Activated B cell treated with CpG ODN at 0.5 μM for 24 hours (primary cell): ENCODE measurements at regions of chr6 and their contacts with region 1.

Region 1: GRCh38 chr6:27672113-27672799 is 199.4 kb upstream of the ZNF184 start:
- DNase-seq: no peak
- ATAC-seq: no peak
- H3K4me3 Mint-ChIP-seq: peak overlapping the region; percentile 2
- H3K27ac Mint-ChIP-seq: peak overlapping the region; percentile 2
- H3K4me1 Mint-ChIP-seq: peaks cover 26% of the 10 kb centered on the region
- H3K27me3 Mint-ChIP-seq: peaks cover 65% of the 10 kb centered on the region
- CTCF ChIP-seq: no peak

Region 2: DNA sequence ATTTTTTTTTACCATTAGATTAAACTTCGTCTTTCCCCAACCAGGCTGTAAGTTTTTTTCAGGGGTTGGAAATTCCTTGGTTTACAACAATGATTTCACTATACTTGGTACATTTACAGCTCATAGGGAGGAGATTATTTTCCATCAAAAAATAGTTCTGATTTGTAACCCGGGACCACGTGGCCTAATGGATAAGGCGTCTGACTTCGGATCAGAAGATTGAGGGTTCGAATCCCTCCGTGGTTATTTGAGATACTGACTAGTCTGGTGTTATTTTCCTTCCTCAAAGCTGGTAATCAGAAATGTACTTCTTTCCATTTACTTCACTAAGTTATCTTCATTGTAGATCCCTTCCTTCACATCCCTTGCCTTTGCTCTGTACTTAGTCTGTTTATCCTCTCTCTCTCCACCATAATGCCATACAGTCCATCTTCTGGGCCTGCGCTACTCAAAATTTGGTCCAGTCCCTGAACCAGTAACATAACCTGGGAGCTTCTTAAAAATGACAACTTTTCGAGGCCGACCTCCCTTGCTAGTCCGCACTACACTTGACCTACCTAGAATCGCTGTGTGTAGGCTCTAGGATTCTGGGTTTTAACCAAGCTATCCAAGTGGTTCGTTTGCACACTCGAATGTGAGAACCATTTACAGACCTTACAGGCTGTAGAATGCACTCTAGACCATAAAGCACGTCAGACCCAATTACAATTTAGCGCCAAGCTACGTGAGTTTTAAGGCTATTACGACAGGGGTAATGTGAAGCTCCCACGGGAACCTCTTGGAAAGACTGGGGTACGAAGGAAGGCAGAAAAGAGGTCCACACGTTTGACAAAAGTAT is 1349.4 kb before region 1 on chr6:
- CTCF ChIA-PET with region 1: no interaction called
- POLR2A ChIA-PET with region 1: no interaction called
- intact Hi-C with region 1: loop called (anchors 5 kb)
- DNase-seq: no peak
- ATAC-seq: peak; percentile 56
- H3K4me3 Mint-ChIP-seq: peak overlapping the region; percentile 89
- H3K27ac Mint-ChIP-seq: peak overlapping the region; percentile 85
- H3K4me1 Mint-ChIP-seq: peaks cover 25% of the 10 kb centered on the region
- H3K27me3 Mint-ChIP-seq: peaks cover 14% of the 10 kb centered on the region
- CTCF ChIP-seq: no peak

Region 3: GRCh38 chr6:27553123-27553904 is 118.9 kb before region 1 on chr6:
- CTCF ChIA-PET with region 1: no interaction called
- POLR2A ChIA-PET with region 1: no interaction called
- intact Hi-C with region 1: loop called (anchors 5 kb)
- DNase-seq: no peak
- ATAC-seq: no peak
- H3K4me3 Mint-ChIP-seq: no peak overlapping the region
- H3K27ac Mint-ChIP-seq: no peak overlapping the region
- H3K4me1 Mint-ChIP-seq: peaks cover 11% of the 10 kb centered on the region
- H3K27me3 Mint-ChIP-seq: peaks cover 63% of the 10 kb centered on the region
- CTCF ChIP-seq: no peak

Region 4: DNA sequence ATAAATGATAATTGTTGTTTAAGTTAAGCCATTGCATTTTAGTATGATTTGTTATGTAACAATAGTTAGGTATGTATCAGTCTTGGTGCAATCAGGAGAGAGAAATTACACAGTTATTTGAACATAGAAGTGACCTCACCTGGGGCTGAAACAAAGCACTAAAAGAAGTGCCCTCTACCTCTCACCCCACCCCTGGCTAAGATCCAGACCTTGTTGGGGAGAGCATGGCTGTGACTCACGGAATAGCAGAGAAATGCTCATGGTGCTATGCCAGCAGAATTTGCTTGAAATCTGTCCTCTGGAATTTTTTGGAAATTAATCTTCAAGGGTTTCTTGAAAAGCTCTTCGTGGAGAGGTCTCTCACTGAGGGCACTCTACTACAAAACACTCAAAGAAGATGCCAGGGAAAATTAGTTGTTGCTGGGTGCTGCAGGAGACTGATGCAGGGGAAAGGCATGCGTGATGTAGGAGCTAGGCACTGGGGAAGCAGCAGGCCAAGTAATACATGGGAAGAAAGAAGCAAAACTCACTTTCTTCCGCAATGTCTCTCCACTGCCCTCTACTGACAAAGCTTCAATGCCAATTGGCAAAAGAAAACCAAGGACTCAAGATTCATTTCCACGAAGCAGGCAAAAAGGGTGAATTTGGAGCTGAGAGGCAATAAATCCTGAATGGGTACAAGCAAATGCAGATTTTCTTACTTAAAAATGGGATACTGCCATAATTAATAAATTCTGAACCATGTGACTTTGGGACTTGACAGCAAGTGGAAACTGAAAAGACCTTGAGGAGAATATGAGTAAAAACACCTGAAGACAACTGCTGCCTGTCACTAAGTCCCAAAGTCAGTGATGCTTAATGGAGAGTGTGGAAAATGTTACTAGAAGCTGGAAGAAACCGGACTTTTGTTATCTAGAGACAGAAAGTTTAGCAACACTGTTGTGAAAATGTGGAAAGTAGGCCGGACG is 63.1 kb before region 1 on chr6:
- CTCF ChIA-PET with region 1: no interaction called
- POLR2A ChIA-PET with region 1: no interaction called
- intact Hi-C with region 1: loop called (anchors 5 kb)
- DNase-seq: no peak
- ATAC-seq: no peak
- H3K4me3 Mint-ChIP-seq: no peak overlapping the region
- H3K27ac Mint-ChIP-seq: no peak overlapping the region
- H3K4me1 Mint-ChIP-seq: peaks cover 7% of the 10 kb centered on the region
- H3K27me3 Mint-ChIP-seq: peaks cover 47% of the 10 kb centered on the region
- CTCF ChIP-seq: no peak

Region 5: GRCh38 chr6:27720607-27721580 is 48.6 kb after region 1 on chr6:
- CTCF ChIA-PET with region 1: no interaction called
- POLR2A ChIA-PET with region 1: no interaction called
- intact Hi-C with region 1: no loop called
- DNase-seq: no peak
- ATAC-seq: no peak
- H3K4me3 Mint-ChIP-seq: no peak overlapping the region
- H3K27ac Mint-ChIP-seq: no peak overlapping the region
- H3K4me1 Mint-ChIP-seq: peaks cover 8% of the 10 kb centered on the region
- H3K27me3 Mint-ChIP-seq: peaks cover 28% of the 10 kb centered on the region
- CTCF ChIP-seq: no peak

Region 6: GRCh38 chr6:27772261-27773001 is 100.2 kb after region 1 on chr6:
- CTCF ChIA-PET with region 1: no interaction called
- POLR2A ChIA-PET with region 1: no interaction called
- intact Hi-C with region 1: no loop called
- DNase-seq: peak; percentile 74
- ATAC-seq: peak; percentile 92
- H3K4me3 Mint-ChIP-seq: peak overlapping the region; percentile 57
- H3K27ac Mint-ChIP-seq: peak overlapping the region; percentile 66
- H3K4me1 Mint-ChIP-seq: peaks cover 38% of the 10 kb centered on the region
- H3K27me3 Mint-ChIP-seq: peaks cover 5% of the 10 kb centered on the region
- CTCF ChIP-seq: peak; percentile 66

Region 7: GRCh38 chr6:27922949-27923348 is 250.7 kb after region 1 on chr6:
- CTCF ChIA-PET with region 1: no interaction called
- POLR2A ChIA-PET with region 1: no interaction called
- intact Hi-C with region 1: no loop called
- DNase-seq: no peak
- ATAC-seq: no peak
- H3K4me3 Mint-ChIP-seq: no peak overlapping the region
- H3K27ac Mint-ChIP-seq: no peak overlapping the region
- H3K4me1 Mint-ChIP-seq: no peaks in the 10 kb centered on the region
- H3K27me3 Mint-ChIP-seq: peaks cover 2% of the 10 kb centered on the region
- CTCF ChIP-seq: no peak

Region 8: GRCh38 chr6:28789553-28790083 is 1117.4 kb after region 1 on chr6:
- CTCF ChIA-PET with region 1: no interaction called
- POLR2A ChIA-PET with region 1: no interaction called
- intact Hi-C with region 1: loop called (anchors 10 kb)
- DNase-seq: no peak
- ATAC-seq: no peak
- H3K4me3 Mint-ChIP-seq: peak overlapping the region; percentile 7
- H3K27ac Mint-ChIP-seq: no peak overlapping the region
- H3K4me1 Mint-ChIP-seq: peaks cover 7% of the 10 kb centered on the region
- H3K27me3 Mint-ChIP-seq: peaks cover 77% of the 10 kb centered on the region
- CTCF ChIP-seq: no peak